HEK293T (cell line): ENCODE measurements at regions of chr12 and their contacts with region 1.

Region 1: DNA sequence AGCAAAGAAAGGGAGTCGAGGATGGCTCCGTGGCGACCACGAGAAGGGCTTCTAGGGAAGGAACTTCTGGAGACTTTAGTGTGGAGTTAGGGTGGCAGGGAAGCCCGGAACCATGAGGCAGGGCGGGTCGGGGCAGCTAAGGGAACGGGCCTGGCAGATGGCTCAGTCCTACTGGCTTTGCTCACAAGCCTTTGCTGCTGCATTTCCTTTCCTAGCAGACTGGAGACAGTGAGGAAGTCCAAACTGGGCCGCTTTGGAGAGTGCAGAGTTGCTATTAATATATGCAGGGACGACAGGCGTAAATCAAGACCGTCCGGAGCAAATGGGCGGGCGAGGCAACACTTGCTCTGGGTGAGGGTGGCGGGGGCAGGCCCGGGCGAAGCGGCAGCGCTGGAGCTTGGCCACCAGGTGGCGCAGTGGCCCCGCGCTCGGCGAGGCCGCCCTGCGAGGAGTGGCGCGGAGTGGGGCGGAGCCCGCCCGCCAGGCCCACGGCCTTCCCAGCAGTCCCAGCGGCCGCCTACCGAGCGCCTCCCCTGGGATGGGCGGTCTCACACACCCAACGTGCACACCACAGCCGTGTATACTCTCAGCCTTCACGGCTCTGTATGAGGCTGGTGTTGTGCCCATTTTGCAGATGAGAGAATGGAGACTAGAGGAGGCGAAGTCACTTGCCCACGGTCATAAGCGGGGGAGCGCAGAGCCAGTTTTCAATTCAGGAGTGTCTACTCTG is 24.4 kb upstream of the LRTM2 start:
- DNase-seq: peak; percentile 92

Region 2: GRCh38 chr12:1634590-1635191 is 161.3 kb before region 1 on chr12:
- CTCF ChIA-PET with region 1: interaction called, 38 read pairs
- POLR2A ChIA-PET with region 1: no interaction called
- DNase-seq: peak; percentile 80

Region 3: DNA sequence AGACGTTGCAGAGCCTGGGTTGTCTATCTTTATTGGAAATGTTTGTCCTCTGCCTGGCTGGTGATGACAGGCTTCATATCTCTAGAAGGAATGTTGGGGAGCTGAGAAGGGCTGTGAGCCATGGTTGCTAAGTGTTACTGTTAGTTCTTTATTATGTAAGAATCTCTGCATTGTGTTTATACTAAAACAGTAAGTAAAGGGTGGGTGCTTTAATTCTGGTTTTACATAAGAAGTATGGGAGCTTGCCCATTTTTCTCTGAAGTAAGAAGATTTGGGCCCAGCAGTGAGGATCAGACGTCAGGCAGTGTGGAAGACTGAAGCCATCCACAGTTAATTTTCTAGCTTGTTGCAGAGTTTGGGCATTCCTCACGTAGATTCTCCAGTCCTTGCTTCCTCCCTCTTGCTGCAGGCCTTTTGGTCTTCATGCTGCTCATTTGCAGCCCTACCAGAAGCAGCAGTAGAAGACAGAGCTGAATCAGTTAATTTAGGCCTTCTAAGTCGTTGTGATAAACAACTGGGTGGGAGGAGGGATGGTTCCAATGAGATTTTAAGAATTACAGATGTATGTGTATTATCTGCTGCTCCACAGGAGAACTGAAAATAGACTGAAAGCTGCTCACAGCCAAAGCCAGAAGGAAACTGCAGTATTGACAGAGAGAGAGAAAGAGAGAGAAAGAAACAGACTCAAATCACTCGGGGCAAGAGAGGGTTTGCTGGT is 145.5 kb before region 1 on chr12:
- CTCF ChIA-PET with region 1: interaction called, 93 read pairs
- POLR2A ChIA-PET with region 1: interaction called, 5 read pairs
- DNase-seq: no peak

Region 4: DNA sequence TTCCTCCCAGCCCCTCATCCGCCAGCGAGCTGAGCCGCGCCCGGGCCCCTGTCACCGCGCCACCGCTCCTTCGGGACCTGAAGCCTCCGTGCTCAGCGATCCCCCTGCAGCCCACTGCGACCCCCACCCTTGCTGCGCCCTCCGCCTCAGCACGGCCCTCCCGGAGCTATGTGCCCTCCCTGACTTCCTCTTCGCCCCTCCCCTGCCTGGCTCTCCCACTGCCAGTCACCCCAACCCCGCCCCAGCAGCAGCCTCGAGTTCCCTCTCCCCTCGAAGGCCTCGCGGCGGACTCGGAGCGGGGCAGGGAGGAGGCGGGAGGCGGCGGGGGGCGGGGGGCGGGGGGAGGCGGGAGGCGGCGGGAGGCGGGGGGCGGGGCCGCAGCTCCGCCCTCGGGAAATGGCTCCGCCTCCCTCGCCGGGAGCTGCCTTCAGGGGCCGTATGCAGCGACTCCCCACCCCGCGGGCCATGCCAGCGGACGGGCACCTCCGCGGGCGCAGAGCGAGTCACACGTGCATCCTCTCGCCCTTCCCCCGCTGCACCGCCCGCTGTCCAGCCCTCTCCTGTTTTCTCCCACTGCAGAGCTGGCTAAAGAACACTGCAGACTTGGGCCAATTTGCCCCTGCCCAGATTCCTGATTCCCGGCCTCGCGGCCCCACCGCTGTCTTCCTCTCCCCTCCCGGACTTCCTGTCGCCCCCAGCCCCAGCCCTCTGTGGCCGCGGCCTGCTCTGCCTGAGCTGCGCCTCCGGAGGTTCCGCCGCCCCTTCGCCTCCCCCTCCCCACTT is 134.2 kb before region 1 on chr12:
- CTCF ChIA-PET with region 1: interaction called, 8 read pairs
- POLR2A ChIA-PET with region 1: interaction called, 12 read pairs
- DNase-seq: peak; percentile 89

Region 5: GRCh38 chr12:1830981-1831963 is 35.3 kb after region 1 on chr12:
- CTCF ChIA-PET with region 1: no interaction called
- POLR2A ChIA-PET with region 1: no interaction called
- DNase-seq: no peak

Region 6: GRCh38 chr12:1939801-1940607 is 144.1 kb after region 1 on chr12:
- CTCF ChIA-PET with region 1: interaction called, 18 read pairs
- POLR2A ChIA-PET with region 1: no interaction called
- DNase-seq: peak; percentile 77